ENCODE measurements at regions of chr6 and their contacts with region 1.

Region 1: DNA sequence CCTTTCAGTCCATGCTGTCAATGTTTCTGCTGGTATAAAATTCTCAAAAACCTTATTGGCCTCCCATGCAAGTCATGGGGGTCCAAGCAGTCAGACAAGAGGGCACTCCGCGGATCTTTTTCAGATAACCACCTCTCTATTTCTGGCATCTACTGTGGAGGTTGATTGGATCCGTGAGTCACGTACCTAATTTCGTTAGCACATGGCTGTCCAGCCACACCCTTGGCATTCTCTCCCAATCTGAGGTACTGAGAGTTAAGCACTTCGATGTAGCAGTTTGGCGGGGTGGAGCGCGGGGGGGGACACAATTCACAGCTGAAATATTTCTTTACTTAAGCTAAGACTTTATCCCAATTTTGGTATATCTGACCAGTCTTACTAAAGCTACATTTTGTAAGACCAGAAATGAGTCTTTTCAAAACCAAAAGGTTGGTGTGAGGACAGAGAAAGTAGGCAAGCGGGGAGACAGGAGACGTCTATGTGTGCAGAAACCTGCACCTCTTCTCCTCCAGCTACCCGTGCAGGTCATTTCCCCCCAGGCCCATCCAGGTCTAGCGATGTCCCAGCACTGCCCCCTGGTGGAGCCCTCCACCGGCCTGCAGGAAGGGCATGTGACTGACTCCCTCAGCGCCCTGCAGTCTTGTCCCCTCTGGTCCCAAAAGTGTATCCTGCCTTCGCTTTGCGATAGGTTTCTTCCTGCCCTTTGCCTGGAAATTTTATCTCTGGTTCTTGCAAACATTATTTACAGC is 113.1 kb downstream of the ADAT2 start:
- DNase-seq: peak; percentile 32
- ATAC-seq: no peak
- H3K4me3 Mint-ChIP-seq: no peak overlapping the region
- H3K27ac Mint-ChIP-seq: no peak overlapping the region
- H3K4me1 Mint-ChIP-seq: no peaks in the 10 kb centered on the region
- H3K27me3 Mint-ChIP-seq: no peaks in the 10 kb centered on the region
- CTCF ChIP-seq: no peak

Region 2: DNA sequence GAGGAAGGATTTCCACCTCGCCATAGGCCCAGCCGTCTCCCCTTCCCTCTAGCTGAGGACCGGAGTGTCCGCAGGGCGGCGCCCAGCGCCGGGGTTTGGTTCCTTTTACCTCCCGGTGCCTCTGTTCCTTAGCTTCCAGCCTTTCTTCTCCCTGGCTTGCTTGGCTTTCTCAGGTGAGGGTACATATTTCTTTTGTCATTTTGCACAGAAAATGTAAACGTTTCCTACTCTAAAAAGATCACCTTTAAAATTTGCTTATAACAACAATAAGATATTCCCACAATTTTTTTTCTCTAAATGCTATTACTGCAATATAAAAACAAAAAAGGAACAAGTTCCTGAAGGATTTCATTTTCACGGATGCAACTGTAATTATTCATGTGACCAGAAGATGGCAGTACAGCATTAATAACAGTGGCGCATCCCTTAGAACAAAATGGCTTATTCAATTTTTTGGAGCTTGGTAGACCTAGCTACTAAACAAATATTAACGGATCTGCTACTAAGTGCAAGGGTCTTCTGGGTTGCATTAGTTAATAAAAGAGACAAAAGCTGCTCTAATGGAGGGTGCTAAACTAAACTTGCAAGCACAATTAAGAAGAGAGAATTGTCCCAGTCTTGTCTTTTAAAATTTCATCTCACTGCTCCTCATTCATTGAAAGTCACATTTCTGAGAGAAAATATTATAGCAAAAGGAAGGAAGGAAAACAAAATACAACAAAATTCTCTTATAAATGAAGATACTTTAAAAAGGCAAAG is 862.7 kb before region 1 on chr6:
- CTCF ChIA-PET with region 1: interaction called, 6 read pairs
- POLR2A ChIA-PET with region 1: no interaction called
- intact Hi-C with region 1: loop called (anchors 2 kb)
- DNase-seq: no peak
- ATAC-seq: peak; percentile 54
- H3K4me3 Mint-ChIP-seq: no peak overlapping the region
- H3K27ac Mint-ChIP-seq: no peak overlapping the region
- H3K4me1 Mint-ChIP-seq: no peaks in the 10 kb centered on the region
- H3K27me3 Mint-ChIP-seq: peaks cover 3% of the 10 kb centered on the region
- CTCF ChIP-seq: peak; percentile 81

Region 3: GRCh38 chr6:142566628-142567396 is 770.6 kb before region 1 on chr6:
- CTCF ChIA-PET with region 1: interaction called, 5 read pairs
- POLR2A ChIA-PET with region 1: no interaction called
- intact Hi-C with region 1: loop called (anchors 1 kb)
- DNase-seq: no peak
- ATAC-seq: peak; percentile 66
- H3K4me3 Mint-ChIP-seq: no peak overlapping the region
- H3K27ac Mint-ChIP-seq: no peak overlapping the region
- H3K4me1 Mint-ChIP-seq: no peaks in the 10 kb centered on the region
- H3K27me3 Mint-ChIP-seq: no peaks in the 10 kb centered on the region
- CTCF ChIP-seq: peak; percentile 79

Measured in activated B cell treated with CpG ODN at 0.5 μM for 24 hours (primary cell).